ENCODE measurements at regions of chr7 and their contacts with region 1.

Region 1: GRCh38 chr7:143416565-143417149 is 8.0 kb upstream of the EPHA1 start:
- DNase-seq: peak; percentile 29
- H3K4me3 ChIP-seq: no peak overlapping the region
- H3K27ac ChIP-seq: peak overlapping the region; percentile 38 to 49
- H3K4me1 ChIP-seq: no peaks in the 10 kb centered on the region
- H3K27me3 ChIP-seq: no peaks in the 10 kb centered on the region
- CTCF ChIP-seq: peak; percentile 80 to 82 (median 80)
- POLR2A ChIP-seq: no peak

Region 2: DNA sequence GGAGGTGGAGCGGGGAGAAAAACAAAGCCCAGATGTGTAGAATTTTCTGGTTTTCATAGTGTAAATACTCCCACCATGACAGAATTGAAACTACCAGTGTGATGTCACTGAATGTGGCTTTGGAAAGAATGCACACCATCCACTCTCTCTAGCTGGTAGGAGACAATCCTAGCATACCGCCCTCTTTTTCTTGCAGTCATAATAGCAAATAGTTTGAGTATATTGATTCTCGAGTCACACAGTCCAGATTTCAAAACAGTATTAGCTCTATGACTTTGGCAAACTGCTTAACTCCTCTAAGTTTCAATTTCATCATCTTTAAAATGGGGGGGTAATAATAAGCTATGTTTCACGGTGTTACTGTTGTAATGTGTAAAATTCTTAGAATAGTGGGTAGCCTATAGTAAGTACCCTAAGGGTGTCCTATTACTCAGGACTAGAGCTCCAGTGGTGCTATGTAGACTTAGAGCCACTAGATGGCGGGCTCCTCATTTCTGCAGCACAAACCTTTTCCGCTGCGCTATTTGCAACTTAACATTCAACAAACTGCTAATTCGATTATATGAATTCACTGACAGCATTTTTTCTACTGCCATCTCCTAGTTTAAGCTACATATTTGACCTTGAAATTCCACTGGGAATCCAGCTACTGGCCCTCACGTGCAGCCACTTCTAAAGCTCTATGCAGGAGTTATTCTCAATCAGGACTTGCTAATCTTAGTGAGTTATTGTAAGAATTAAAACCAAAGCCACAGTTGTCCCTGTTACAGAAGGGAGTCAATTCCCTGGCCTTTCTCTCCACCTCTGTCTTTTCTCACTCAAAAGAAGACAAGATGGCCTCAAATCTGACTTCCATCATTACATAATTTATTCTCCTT is 176.1 kb before region 1 on chr7:
- intact Hi-C with region 1: loop called (anchors 5 kb)
- DNase-seq: peak; percentile 74
- H3K4me3 ChIP-seq: no peak overlapping the region
- H3K27ac ChIP-seq: no peak overlapping the region
- H3K4me1 ChIP-seq: no peaks in the 10 kb centered on the region
- H3K27me3 ChIP-seq: no peaks in the 10 kb centered on the region
- CTCF ChIP-seq: peak; percentile 65 to 90 (median 88)
- POLR2A ChIP-seq: no peak

Region 3: GRCh38 chr7:143299840-143300239 is 116.8 kb before region 1 on chr7:
- intact Hi-C with region 1: loop called (anchors 5 kb)
- DNase-seq: no peak
- H3K4me3 ChIP-seq: no peak overlapping the region
- H3K27ac ChIP-seq: no peak overlapping the region
- H3K4me1 ChIP-seq: peaks cover 10% of the 10 kb centered on the region
- H3K27me3 ChIP-seq: no peaks in the 10 kb centered on the region
- CTCF ChIP-seq: peak in 2 of 4 experiments; percentile 29 to 37
- POLR2A ChIP-seq: no peak

Region 4: DNA sequence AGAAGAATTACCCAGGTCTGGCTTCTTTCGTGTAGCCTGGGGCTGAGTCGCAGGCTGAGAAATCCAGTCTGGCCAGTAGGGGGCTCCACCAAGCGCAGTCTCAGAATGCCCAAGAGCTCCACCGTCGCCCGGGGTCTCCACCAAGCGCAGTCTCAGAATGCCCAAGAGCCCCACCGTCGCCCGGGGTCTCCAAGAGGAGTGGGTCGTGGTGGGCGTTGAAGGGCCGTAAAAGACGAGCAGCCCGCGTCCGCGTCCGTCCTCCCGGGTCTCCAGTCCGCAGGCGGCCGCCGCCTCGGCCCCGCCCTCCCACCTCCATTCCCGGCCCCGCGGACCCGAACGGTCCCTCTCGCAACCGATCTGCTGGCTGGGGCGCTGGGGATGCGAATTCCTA is 36.4 kb before region 1 on chr7:
- intact Hi-C with region 1: loop called (anchors 5 kb)
- DNase-seq: peak; percentile 84
- H3K4me3 ChIP-seq: peak overlapping the region; percentile 82 to 89
- H3K27ac ChIP-seq: peak overlapping the region; percentile 97 to 99
- H3K4me1 ChIP-seq: peaks cover 5% of the 10 kb centered on the region
- H3K27me3 ChIP-seq: no peaks in the 10 kb centered on the region
- CTCF ChIP-seq: peak; percentile 84 to 91 (median 90)
- POLR2A ChIP-seq: peak; percentile 23

Measured in prostate gland (tissue), 2 donors.